ENCODE measurements at regions of chr7 and their contacts with region 1.

Region 1: GRCh38 chr7:43647673-43648472 is 65.0 kb downstream of the STK17A start:
- DNase-seq: peak in 7 of 9 experiments; percentile 42 to 72 (median 54)
- ATAC-seq: peak; percentile 13
- H3K4me3 ChIP-seq: peak overlapping the region; percentile 42 to 47
- H3K4me3 Mint-ChIP-seq: peak overlapping the region; percentile 77
- H3K27ac ChIP-seq: peak overlapping the region; percentile 75 to 83
- H3K27ac Mint-ChIP-seq: peak overlapping the region; percentile 100
- H3K4me1 ChIP-seq: peaks cover 91% of the 10 kb centered on the region
- H3K4me1 Mint-ChIP-seq: peaks cover 98% of the 10 kb centered on the region
- H3K27me3 ChIP-seq: no peaks in the 10 kb centered on the region
- H3K27me3 Mint-ChIP-seq: no peaks in the 10 kb centered on the region
- CTCF ChIP-seq: no peak

Region 2: DNA sequence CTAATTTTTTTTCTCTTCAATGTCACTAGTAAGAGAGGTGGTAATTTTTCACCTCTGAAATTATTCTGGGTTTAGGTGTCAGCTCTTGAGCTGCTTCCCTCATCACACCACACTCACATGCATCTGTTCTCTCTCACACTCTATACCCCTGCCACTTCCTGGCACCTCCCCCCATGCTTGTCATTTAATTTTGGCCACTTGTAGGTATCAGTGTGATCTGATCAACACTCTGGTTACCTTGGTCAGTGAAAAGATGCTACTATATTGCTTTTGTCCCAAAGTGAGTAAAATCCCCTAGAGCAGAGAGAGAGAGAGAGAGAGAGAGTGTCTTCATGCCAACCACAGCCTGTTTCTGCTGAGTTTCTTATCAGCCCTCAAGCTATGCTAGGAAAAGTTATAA is 22.4 kb before region 1 on chr7:
- CTCF ChIA-PET with region 1: interaction called, 5 read pairs
- POLR2A ChIA-PET with region 1: interaction called, 13 read pairs
- intact Hi-C with region 1: loop called in 1 of 2 experiments (anchors 2 kb)
- DNase-seq: peak; percentile 25 to 94 (median 61)
- ATAC-seq: peak; percentile 74
- H3K4me3 ChIP-seq: no peak overlapping the region
- H3K4me3 Mint-ChIP-seq: peak overlapping the region; percentile 71
- H3K27ac ChIP-seq: peak overlapping the region; percentile 23 to 75
- H3K27ac Mint-ChIP-seq: peak overlapping the region; percentile 94
- H3K4me1 ChIP-seq: peaks cover 94% of the 10 kb centered on the region
- H3K4me1 Mint-ChIP-seq: peaks cover 94% of the 10 kb centered on the region
- H3K27me3 ChIP-seq: no peaks in the 10 kb centered on the region
- H3K27me3 Mint-ChIP-seq: no peaks in the 10 kb centered on the region
- CTCF ChIP-seq: no peak

Region 3: GRCh38 chr7:43631559-43631958 is 16.3 kb before region 1 on chr7:
- CTCF ChIA-PET with region 1: interaction called, 10 read pairs
- POLR2A ChIA-PET with region 1: interaction called, 27 read pairs
- intact Hi-C with region 1: loop called (anchors 2 kb)
- DNase-seq: peak in 1 of 9 experiments; percentile 57
- ATAC-seq: peak; percentile 47
- H3K4me3 ChIP-seq: no peak overlapping the region
- H3K4me3 Mint-ChIP-seq: peak overlapping the region; percentile 59
- H3K27ac ChIP-seq: peak overlapping the region; percentile 6 to 67
- H3K27ac Mint-ChIP-seq: peak overlapping the region; percentile 94
- H3K4me1 ChIP-seq: peaks cover 93% of the 10 kb centered on the region
- H3K4me1 Mint-ChIP-seq: peaks cover 94% of the 10 kb centered on the region
- H3K27me3 ChIP-seq: no peaks in the 10 kb centered on the region
- H3K27me3 Mint-ChIP-seq: no peaks in the 10 kb centered on the region
- CTCF ChIP-seq: no peak

Region 4: GRCh38 chr7:43658718-43659548 is 11.1 kb after region 1 on chr7:
- CTCF ChIA-PET with region 1: no interaction called
- POLR2A ChIA-PET with region 1: interaction called, 9 read pairs
- intact Hi-C with region 1: loop called in 1 of 2 experiments (anchors 1 kb)
- DNase-seq: peak in 1 of 9 experiments; percentile 46
- ATAC-seq: peak; percentile 57
- H3K4me3 ChIP-seq: no peak overlapping the region
- H3K4me3 Mint-ChIP-seq: peak overlapping the region; percentile 69
- H3K27ac ChIP-seq: peak overlapping the region in 1 of 2 experiments; percentile 60
- H3K27ac Mint-ChIP-seq: peak overlapping the region; percentile 87
- H3K4me1 ChIP-seq: peaks cover 49% of the 10 kb centered on the region
- H3K4me1 Mint-ChIP-seq: peaks cover 58% of the 10 kb centered on the region
- H3K27me3 ChIP-seq: no peaks in the 10 kb centered on the region
- H3K27me3 Mint-ChIP-seq: no peaks in the 10 kb centered on the region
- CTCF ChIP-seq: no peak

Region 5: DNA sequence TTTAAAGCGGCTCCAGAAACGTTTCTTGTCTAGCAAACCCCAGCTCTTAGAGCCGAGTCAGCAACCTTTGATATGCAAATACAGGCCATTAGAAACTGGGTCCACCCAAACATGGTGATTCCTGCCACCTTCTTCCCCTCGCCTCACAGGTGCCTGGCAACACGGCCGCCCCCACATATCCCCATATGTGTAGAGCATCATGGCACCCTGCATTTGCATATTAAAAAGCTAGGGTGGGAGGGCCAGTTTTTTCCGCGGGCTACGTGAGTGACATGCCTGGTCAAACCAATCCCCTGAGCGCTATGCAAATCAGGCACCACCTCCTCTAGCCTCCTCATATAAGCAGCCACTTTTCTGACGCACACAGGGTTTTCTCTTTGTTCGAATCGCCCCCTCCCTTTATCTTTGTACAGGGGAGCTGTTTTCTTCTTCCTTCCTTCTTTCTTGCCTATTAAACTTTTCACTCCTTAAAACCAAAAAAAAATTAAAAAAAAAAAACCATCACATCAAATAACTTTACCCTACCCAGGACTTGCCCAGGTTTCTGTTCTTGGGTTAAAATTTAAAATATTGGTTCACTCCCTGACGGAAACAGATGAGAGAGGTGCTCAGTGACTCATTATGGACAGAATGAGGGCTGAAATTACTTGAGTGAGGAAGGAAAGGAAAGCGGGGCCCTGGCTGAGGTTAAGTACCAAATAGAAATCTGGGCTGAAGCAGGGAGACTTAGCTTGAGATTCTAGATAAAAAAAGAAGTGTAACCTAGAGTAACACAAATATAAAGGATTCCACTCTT is 21.6 kb after region 1 on chr7:
- CTCF ChIA-PET with region 1: no interaction called
- POLR2A ChIA-PET with region 1: interaction called, 20 read pairs
- intact Hi-C with region 1: loop called (anchors 1 kb)
- DNase-seq: peak in 7 of 9 experiments; percentile 34 to 85 (median 61)
- ATAC-seq: peak; percentile 76
- H3K4me3 ChIP-seq: no peak overlapping the region
- H3K4me3 Mint-ChIP-seq: peak overlapping the region; percentile 66
- H3K27ac ChIP-seq: peak overlapping the region; percentile 33 to 56
- H3K27ac Mint-ChIP-seq: peak overlapping the region; percentile 73
- H3K4me1 ChIP-seq: peaks cover 40% of the 10 kb centered on the region
- H3K4me1 Mint-ChIP-seq: peaks cover 76% of the 10 kb centered on the region
- H3K27me3 ChIP-seq: no peaks in the 10 kb centered on the region
- H3K27me3 Mint-ChIP-seq: no peaks in the 10 kb centered on the region
- CTCF ChIP-seq: no peak

Region 6: GRCh38 chr7:43674584-43675436 is 26.9 kb after region 1 on chr7:
- CTCF ChIA-PET with region 1: no interaction called
- POLR2A ChIA-PET with region 1: interaction called, 20 read pairs
- intact Hi-C with region 1: loop called in 1 of 2 experiments (anchors 2 kb)
- DNase-seq: no peak
- ATAC-seq: no peak
- H3K4me3 ChIP-seq: no peak overlapping the region
- H3K4me3 Mint-ChIP-seq: no peak overlapping the region
- H3K27ac ChIP-seq: no peak overlapping the region
- H3K27ac Mint-ChIP-seq: no peak overlapping the region
- H3K4me1 ChIP-seq: peaks cover 38% of the 10 kb centered on the region
- H3K4me1 Mint-ChIP-seq: peaks cover 84% of the 10 kb centered on the region
- H3K27me3 ChIP-seq: no peaks in the 10 kb centered on the region
- H3K27me3 Mint-ChIP-seq: no peaks in the 10 kb centered on the region
- CTCF ChIP-seq: no peak

Region 7: GRCh38 chr7:43693687-43694398 is 46.0 kb after region 1 on chr7:
- CTCF ChIA-PET with region 1: interaction called, 115 read pairs
- POLR2A ChIA-PET with region 1: interaction called, 35 read pairs
- intact Hi-C with region 1: no loop called
- DNase-seq: no peak
- ATAC-seq: no peak
- H3K4me3 ChIP-seq: no peak overlapping the region
- H3K4me3 Mint-ChIP-seq: no peak overlapping the region
- H3K27ac ChIP-seq: no peak overlapping the region
- H3K27ac Mint-ChIP-seq: no peak overlapping the region
- H3K4me1 ChIP-seq: peaks cover 67% of the 10 kb centered on the region
- H3K4me1 Mint-ChIP-seq: peaks cover 52% of the 10 kb centered on the region
- H3K27me3 ChIP-seq: no peaks in the 10 kb centered on the region
- H3K27me3 Mint-ChIP-seq: no peaks in the 10 kb centered on the region
- CTCF ChIP-seq: no peak